ENCODE measurements at regions of chr14 and their contacts with region 1.

Region 1: DNA sequence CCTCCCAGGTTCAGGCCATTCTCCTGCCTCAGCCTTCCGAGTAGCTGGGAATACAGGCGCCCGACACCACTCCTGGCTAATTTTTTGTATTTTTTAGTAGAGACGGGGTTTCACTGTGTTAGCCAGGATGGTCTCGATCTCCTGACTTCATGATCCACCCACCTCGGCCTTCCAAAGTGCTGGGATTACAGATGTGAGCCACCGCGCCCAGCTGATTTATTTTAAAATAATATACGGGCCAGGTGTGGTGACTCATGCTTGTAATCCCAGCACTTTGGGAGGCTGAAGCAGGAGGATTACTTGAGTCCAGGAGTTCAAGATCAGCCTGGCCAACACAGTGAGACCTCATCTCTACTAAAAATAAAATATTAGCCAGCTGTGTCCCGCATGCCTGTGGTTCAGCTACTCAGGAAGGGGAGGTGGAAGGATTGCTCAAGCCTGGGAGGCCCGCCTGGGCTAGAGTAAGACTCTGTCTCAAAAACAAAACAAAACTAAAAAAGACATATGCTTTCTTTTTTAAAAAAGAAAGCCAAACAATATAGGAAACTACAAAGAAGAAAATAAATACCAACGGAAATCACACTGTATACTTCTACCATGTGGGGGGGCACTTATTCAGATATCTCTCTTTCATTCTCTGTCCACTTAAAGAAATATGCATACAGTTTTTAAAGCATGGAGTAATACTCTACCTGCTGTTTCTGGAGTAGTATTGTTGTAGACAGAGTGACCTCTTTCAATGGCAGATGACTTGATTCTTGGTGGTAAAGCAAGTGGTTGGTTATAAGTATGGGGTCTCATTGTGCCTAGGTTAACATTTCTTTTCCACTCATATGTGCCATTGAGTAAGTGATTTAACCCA is 930 bp upstream of the MIA2 start:
- DNase-seq: no peak
- ATAC-seq: peak; percentile 65
- H3K4me3 ChIP-seq: no peak overlapping the region
- H3K27ac ChIP-seq: no peak overlapping the region
- H3K4me1 ChIP-seq: no peaks in the 10 kb centered on the region
- H3K27me3 ChIP-seq: no peaks in the 10 kb centered on the region
- CTCF ChIP-seq: no peak; a peak in 1 of 6 replicates
- EP300 ChIP-seq: no peak
- POLR2A ChIP-seq: no peak
- RAD21 ChIP-seq: 0 out of 2 replicates have a peak, but pooled peaks have one; percentile 19

Region 2: DNA sequence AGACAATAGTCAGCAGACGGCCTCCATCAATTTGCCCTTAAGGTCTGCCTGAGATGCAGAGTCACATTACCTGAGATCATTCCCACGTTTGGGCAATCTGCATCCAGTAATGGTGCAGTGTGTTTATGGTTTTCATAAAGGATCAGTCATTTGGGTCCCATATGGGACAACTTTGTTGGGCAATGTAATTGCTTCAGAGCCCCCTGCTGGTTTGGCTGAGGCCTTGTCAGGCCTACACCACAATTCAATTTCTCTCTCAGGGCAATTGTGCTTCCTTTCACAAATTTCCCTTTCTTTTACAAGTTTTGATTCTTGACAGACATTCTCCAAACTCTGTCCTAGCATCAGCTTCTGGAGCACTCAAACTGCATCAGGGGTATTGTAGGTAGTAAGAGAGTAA is 1216.3 kb before region 1 on chr14:
- CTCF ChIA-PET with region 1: no interaction called
- POLR2A ChIA-PET with region 1: no interaction called
- RAD21 ChIA-PET with region 1: no interaction called
- SMC1A ChIA-PET with region 1: no interaction called
- in situ Hi-C with region 1: no loop called
- intact Hi-C with region 1: no loop called
- DNase-seq: no peak
- ATAC-seq: no peak
- H3K4me3 ChIP-seq: no peak overlapping the region
- H3K27ac ChIP-seq: no peak overlapping the region
- H3K4me1 ChIP-seq: no peaks in the 10 kb centered on the region
- H3K27me3 ChIP-seq: no peaks in the 10 kb centered on the region
- CTCF ChIP-seq: 0 out of 6 replicates have a peak, but pooled peaks of 1 of the 3 experiments have one; percentile 2
- EP300 ChIP-seq: no peak
- POLR2A ChIP-seq: no peak
- RAD21 ChIP-seq: no peak

Region 3: DNA sequence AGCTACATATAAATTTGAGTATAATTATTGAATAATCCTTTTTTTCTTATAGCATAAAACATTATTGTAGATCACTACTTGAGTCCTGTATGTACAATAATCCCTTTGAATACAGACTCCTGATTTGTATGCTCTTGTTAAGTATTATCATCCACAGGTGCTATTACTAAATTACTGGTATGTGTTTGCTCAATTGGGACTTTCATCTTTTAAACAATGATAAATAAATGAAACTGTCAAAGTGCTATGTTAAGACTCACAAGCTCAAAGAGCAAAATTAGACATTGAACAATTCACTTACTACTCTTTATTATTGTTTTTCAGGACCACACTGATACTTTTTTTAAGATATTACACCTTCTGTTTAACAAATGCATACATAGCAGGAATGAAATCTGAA is 18.8 kb after region 1 on chr14:
- CTCF ChIA-PET with region 1: interaction called, 10 read pairs
- POLR2A ChIA-PET with region 1: no interaction called
- RAD21 ChIA-PET with region 1: interaction called, 5 read pairs
- SMC1A ChIA-PET with region 1: interaction called, 13 read pairs
- in situ Hi-C with region 1: no loop called
- intact Hi-C with region 1: no loop called
- DNase-seq: no peak
- ATAC-seq: no peak
- H3K4me3 ChIP-seq: no peak overlapping the region
- H3K27ac ChIP-seq: no peak overlapping the region
- H3K4me1 ChIP-seq: no peaks in the 10 kb centered on the region
- H3K27me3 ChIP-seq: no peaks in the 10 kb centered on the region
- CTCF ChIP-seq: no peak
- EP300 ChIP-seq: no peak
- POLR2A ChIP-seq: no peak
- RAD21 ChIP-seq: no peak

Region 4: DNA sequence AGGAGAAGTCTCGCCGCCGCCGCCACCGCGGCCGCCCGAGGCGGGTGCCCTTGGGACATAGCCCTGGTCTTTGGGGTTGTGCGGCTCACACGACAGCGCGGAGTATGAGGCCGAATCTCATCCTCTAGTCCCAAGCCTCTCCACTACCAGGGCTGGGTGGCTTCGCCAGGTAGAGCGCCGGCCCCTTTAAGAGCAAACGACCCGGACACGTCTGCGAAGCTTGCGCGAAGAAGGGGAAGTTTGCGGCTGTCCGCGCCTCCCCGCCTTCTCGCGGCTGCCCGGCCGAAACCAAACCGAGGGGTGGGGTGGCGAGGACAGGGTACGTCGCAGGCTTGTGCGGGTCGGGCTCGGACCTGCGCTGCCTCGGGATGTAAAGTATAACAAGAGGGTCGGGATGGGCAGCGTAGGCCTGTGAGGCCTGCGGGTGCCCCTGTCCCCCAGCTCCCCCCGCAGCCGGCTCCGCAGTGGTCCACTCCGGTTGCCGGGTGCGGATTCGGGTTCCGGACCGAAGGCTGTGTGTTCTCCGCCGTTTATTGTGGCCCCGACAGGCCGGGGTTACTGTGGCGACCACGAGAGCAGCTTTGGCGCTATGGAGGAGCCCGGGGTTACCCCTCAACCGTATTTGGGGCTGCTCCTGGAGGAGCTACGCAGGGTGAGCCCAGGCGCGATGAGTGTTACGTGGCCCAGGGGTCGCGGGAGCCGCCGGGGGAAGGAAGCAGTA is 34.2 kb after region 1 on chr14:
- CTCF ChIA-PET with region 1: interaction called, 8 read pairs
- POLR2A ChIA-PET with region 1: no interaction called
- RAD21 ChIA-PET with region 1: interaction called, 7 read pairs
- SMC1A ChIA-PET with region 1: interaction called, 20 read pairs
- in situ Hi-C with region 1: no loop called
- intact Hi-C with region 1: no loop called
- DNase-seq: no peak
- ATAC-seq: peak; percentile 92
- H3K4me3 ChIP-seq: peak overlapping the region; percentile 92
- H3K27ac ChIP-seq: peak overlapping the region; percentile 93
- H3K4me1 ChIP-seq: peaks cover 9% of the 10 kb centered on the region
- H3K27me3 ChIP-seq: no peaks in the 10 kb centered on the region
- CTCF ChIP-seq: no peak
- EP300 ChIP-seq: peak in 1 of 2 experiments; percentile 29; a peak in 1 of 4 replicates
- POLR2A ChIP-seq: peak; percentile 82
- RAD21 ChIP-seq: no peak

Region 5: GRCh38 chr14:39291701-39292100 is 58.9 kb after region 1 on chr14:
- CTCF ChIA-PET with region 1: interaction called, 6 read pairs
- POLR2A ChIA-PET with region 1: no interaction called
- RAD21 ChIA-PET with region 1: interaction called, 5 read pairs
- SMC1A ChIA-PET with region 1: interaction called, 14 read pairs
- in situ Hi-C with region 1: no loop called
- intact Hi-C with region 1: no loop called
- DNase-seq: no peak
- ATAC-seq: no peak
- H3K4me3 ChIP-seq: no peak overlapping the region
- H3K27ac ChIP-seq: no peak overlapping the region
- H3K4me1 ChIP-seq: no peaks in the 10 kb centered on the region
- H3K27me3 ChIP-seq: no peaks in the 10 kb centered on the region
- CTCF ChIP-seq: no peak
- EP300 ChIP-seq: no peak
- POLR2A ChIP-seq: no peak
- RAD21 ChIP-seq: no peak

Region 6: GRCh38 chr14:39368261-39368959 is 135.6 kb after region 1 on chr14:
- CTCF ChIA-PET with region 1: interaction called, 17 read pairs
- POLR2A ChIA-PET with region 1: no interaction called
- RAD21 ChIA-PET with region 1: interaction called, 5 read pairs
- SMC1A ChIA-PET with region 1: interaction called, 15 read pairs
- in situ Hi-C with region 1: no loop called
- intact Hi-C with region 1: loop called (anchors 1 kb)
- DNase-seq: no peak
- ATAC-seq: peak; percentile 46; the same call in 2 of the 3 replicates
- H3K4me3 ChIP-seq: no peak overlapping the region
- H3K27ac ChIP-seq: no peak overlapping the region
- H3K4me1 ChIP-seq: no peaks in the 10 kb centered on the region
- H3K27me3 ChIP-seq: no peaks in the 10 kb centered on the region
- CTCF ChIP-seq: peak; percentile 31 to 61 (median 37); a peak in 5 of 6 replicates
- EP300 ChIP-seq: no peak
- POLR2A ChIP-seq: no peak
- RAD21 ChIP-seq: peak; percentile 84

Region 7: GRCh38 chr14:39469094-39469710 is 236.4 kb after region 1 on chr14:
- CTCF ChIA-PET with region 1: interaction called, 76 read pairs
- POLR2A ChIA-PET with region 1: no interaction called
- RAD21 ChIA-PET with region 1: interaction called, 42 read pairs
- SMC1A ChIA-PET with region 1: interaction called, 76 read pairs
- in situ Hi-C with region 1: no loop called
- intact Hi-C with region 1: loop called (anchors 1 kb)
- DNase-seq: no peak
- ATAC-seq: peak; percentile 97
- H3K4me3 ChIP-seq: no peak overlapping the region
- H3K27ac ChIP-seq: no peak overlapping the region
- H3K4me1 ChIP-seq: no peaks in the 10 kb centered on the region
- H3K27me3 ChIP-seq: no peaks in the 10 kb centered on the region
- CTCF ChIP-seq: peak; percentile 76 to 90 (median 78)
- EP300 ChIP-seq: no peak
- POLR2A ChIP-seq: no peak
- RAD21 ChIP-seq: peak; percentile 95

Region 8: DNA sequence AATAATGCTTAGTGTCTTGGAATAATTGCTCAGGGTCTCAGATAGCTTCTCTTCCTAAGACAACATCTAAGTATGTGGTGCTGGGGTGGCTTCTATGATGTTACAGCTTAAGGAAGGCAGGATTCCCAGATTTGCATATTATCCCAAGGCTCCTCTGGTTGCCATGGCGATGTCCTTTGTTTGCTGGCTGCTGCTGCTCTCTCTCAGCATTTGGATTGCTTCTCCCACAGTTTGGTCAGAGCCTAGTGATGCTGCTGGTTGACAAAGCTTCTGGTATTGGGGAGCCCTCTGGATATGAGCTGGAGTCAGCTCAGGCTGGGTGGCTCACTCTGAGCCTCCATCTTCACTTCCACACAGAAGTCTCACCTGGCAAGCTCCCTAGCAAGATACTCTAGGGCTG is 255.8 kb after region 1 on chr14:
- CTCF ChIA-PET with region 1: interaction called, 6 read pairs
- POLR2A ChIA-PET with region 1: no interaction called
- RAD21 ChIA-PET with region 1: interaction called, 14 read pairs
- SMC1A ChIA-PET with region 1: interaction called, 4 read pairs
- in situ Hi-C with region 1: no loop called
- intact Hi-C with region 1: no loop called
- DNase-seq: no peak
- ATAC-seq: no peak
- H3K4me3 ChIP-seq: no peak overlapping the region
- H3K27ac ChIP-seq: no peak overlapping the region
- H3K4me1 ChIP-seq: no peaks in the 10 kb centered on the region
- H3K27me3 ChIP-seq: no peaks in the 10 kb centered on the region
- CTCF ChIP-seq: no peak
- EP300 ChIP-seq: no peak
- POLR2A ChIP-seq: no peak
- RAD21 ChIP-seq: no peak

Measured in GM12878 (cell line).